GM23248 (cell line): ENCODE measurements at regions of chr12 and their contacts with region 1.

Region 1: DNA sequence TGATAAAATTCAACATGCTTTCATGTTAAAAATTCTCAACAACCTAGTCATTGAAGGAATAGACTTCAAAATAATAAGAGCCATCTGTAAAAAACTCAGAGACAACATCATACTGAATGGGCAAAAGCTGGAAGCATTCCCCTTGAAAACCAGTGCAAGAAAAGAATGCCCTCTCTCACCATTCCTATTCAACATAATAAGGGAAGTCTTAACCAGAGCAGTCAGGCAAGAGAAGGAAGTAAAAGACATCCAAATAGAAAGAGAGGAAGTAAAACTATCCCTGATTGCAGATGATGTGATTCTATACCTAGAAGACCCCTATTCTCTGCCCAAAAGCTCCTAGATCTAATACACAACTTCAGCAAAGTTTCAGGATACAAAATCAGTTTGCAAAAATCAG is 52.9 kb downstream of the APOBEC1 start:
- DNase-seq: no peak
- H3K4me3 ChIP-seq: no peak overlapping the region
- H3K27ac ChIP-seq: no peak overlapping the region
- H3K4me1 ChIP-seq: no peaks in the 10 kb centered on the region
- H3K27me3 ChIP-seq: peaks cover 6% of the 10 kb centered on the region; the same call in 1 of the 2 replicates

Region 2: GRCh38 chr12:7374423-7375144 is 238.3 kb before region 1 on chr12:
- in situ Hi-C with region 1: loop called (anchors 10 kb)
- DNase-seq: peak; percentile 69
- H3K4me3 ChIP-seq: no peak overlapping the region
- H3K27ac ChIP-seq: no peak overlapping the region
- H3K4me1 ChIP-seq: peaks cover 9% of the 10 kb centered on the region; the same call in 1 of the 2 replicates
- H3K27me3 ChIP-seq: no peaks in the 10 kb centered on the region

Region 3: DNA sequence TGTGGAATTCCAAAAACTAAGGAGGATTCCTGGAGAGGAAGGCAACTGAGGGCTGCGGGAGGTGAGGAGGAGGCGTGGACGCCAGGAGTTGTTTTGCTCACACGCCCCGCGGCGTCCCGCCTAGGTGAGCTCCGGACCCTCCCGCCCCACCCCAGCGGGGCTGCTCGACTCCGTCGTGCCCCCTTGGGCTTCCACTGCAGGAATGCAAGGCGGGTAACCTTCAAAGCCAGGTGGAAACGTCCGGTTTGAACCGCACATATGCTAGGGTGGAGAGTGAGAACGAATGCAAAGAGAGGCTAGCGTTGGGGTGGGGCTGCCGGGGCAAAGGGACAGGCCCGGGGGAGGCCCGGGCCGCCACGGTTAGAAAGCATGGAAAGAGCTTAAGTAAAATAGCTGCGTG is 93.0 kb after region 1 on chr12:
- in situ Hi-C with region 1: no loop called
- DNase-seq: no peak
- H3K4me3 ChIP-seq: no peak overlapping the region
- H3K27ac ChIP-seq: no peak overlapping the region
- H3K4me1 ChIP-seq: no peaks in the 10 kb centered on the region
- H3K27me3 ChIP-seq: peaks cover 4% of the 10 kb centered on the region; the same call in 1 of the 2 replicates

Region 4: DNA sequence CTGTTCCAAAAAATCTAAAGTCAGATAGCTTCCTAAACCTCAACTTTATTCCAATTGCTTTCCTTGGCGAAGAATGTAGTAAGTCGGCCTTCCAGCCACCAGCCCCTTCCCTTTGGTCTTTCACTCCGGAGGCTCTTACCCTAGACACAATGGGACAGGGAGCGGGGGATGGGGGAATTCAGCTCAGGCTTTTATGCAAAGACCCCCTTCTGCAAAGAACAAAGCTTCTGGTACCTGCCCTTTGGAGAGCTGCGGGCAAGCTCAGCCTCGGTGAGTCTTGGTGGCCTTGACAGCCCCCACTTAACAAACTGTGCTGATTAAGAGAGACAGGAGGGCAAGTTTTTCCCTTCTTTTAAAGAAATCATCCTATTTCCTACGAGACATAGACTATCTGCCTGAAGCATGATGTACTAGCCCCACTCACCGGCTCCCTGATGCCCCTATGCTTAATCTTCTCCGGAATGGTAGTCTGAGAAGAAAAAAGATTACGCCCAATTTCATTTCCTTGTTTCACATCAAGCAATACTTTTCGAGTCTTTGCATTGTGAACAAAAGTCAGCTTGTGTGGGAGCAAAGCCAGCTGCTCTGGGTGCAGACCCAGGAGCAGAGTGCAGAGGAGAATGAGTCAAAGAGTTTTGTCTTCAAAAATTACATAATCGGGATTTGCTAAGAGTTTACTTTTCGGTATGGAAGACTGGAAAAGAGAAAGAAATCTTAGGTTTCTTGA is 174.9 kb after region 1 on chr12:
- in situ Hi-C with region 1: no loop called
- DNase-seq: peak; percentile 6
- H3K4me3 ChIP-seq: no peak overlapping the region
- H3K27ac ChIP-seq: no peak overlapping the region
- H3K4me1 ChIP-seq: no peaks in the 10 kb centered on the region
- H3K27me3 ChIP-seq: peaks cover 58% of the 10 kb centered on the region

Region 5: GRCh38 chr12:7837366-7837765 is 224.5 kb after region 1 on chr12:
- in situ Hi-C with region 1: no loop called
- DNase-seq: no peak
- H3K4me3 ChIP-seq: no peak overlapping the region
- H3K27ac ChIP-seq: no peak overlapping the region
- H3K4me1 ChIP-seq: 0 out of 2 replicates have a peak, but pooled peaks cover 5% of the 10 kb centered on the region
- H3K27me3 ChIP-seq: no peaks in the 10 kb centered on the region